Activated T-helper 1 cell treated with anti-CD3 and anti-CD28 coated beads, Interleukin-12 subunit alpha, Interleukin-12 subunit beta, Interleukin-2, Interleukin-4 antibody, amounts not matched to agents 30 ng/mL and 10 ng/mL and 1 ng/mL, durations not matched to agents 14 hours and 24 hours and 36 hours (primary cell): ENCODE measurements at regions of chr13 and their contacts with region 1.

Region 1: DNA sequence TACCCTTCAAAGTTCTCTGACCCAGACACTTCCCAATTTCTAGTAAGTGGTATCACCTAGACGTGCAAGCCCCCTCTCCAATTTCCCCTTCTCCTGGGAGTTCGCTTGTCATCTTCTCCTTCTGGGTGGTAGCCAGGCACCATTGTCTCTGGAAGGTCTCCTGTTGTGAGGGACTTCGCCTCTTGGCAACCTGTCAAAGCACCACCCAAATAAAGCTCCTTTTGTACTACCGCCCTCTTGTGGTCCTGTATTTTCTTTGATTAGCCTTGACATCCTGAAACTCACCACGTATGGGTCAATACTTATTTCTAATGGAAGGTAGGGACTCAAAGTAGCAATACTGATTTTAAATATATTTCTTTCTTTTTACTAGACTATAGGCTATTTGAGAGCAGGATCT is 8.2 kb downstream of the GPC5 start:
- DNase-seq: no peak
- H3K4me3 Mint-ChIP-seq: no peak overlapping the region
- H3K27ac Mint-ChIP-seq: no peak overlapping the region
- H3K4me1 Mint-ChIP-seq: no peaks in the 10 kb centered on the region
- H3K27me3 Mint-ChIP-seq: peaks cover 39% of the 10 kb centered on the region

Region 2: GRCh38 chr13:90997951-90998350 is 408.7 kb before region 1 on chr13:
- intact Hi-C with region 1: no loop called
- DNase-seq: no peak
- H3K4me3 Mint-ChIP-seq: no peak overlapping the region
- H3K27ac Mint-ChIP-seq: no peak overlapping the region
- H3K4me1 Mint-ChIP-seq: no peaks in the 10 kb centered on the region
- H3K27me3 Mint-ChIP-seq: no peaks in the 10 kb centered on the region

Region 3: DNA sequence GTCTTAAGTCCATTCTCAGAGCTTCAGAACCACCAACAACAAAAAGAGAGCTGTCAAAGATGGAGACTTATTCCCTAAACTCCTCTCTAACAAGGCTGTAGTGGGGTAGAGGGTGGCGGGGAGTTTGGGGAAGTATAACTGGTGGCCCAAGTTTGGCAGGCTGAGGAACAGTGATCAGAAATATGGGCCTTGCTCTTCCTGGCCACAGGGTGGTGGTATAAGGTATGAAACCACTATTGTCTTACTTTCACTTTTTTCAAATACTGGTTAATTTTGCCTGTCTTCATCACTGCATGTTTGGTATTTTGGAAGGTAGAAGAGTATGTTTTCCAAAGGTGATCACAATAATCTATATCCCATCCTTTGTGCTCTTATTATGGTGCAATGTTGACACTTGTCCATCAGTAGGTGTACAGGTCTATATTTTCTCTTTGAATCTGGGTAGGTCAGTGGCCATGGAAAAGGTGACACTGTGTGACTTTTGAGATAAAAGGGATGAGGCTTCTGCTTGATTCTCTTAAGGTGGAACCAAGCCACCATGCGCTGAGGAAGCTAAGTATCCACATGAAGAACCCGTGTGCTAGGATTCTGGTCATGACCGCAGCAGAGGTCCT is 31.4 kb before region 1 on chr13:
- intact Hi-C with region 1: loop called (anchors 1 kb)
- DNase-seq: no peak
- H3K4me3 Mint-ChIP-seq: no peak overlapping the region
- H3K27ac Mint-ChIP-seq: no peak overlapping the region
- H3K4me1 Mint-ChIP-seq: peaks cover 12% of the 10 kb centered on the region
- H3K27me3 Mint-ChIP-seq: peaks cover 10% of the 10 kb centered on the region